T-cell (primary cell): ENCODE measurements at regions of chr6 and their contacts with region 1.

Region 1: GRCh38 chr6:154202339-154202738 is 154.3 kb downstream of the IPCEF1 start:
- DNase-seq: no peak
- ATAC-seq: no peak
- H3K4me3 ChIP-seq: no peak overlapping the region
- H3K4me3 Mint-ChIP-seq: no peak overlapping the region
- H3K27ac ChIP-seq: no peak overlapping the region
- H3K27ac Mint-ChIP-seq: peak overlapping the region in 1 of 2 donors; percentile 21
- H3K4me1 ChIP-seq: peaks cover 0 to 2% of the 10 kb centered on the region in 2 experiments
- H3K4me1 Mint-ChIP-seq: peaks cover 68 to 83% (median 69%) of the 10 kb centered on the region in 3 donors
- H3K27me3 ChIP-seq: no peaks in the 10 kb centered on the region
- H3K27me3 Mint-ChIP-seq: no peaks in the 10 kb centered on the region

Region 2: DNA sequence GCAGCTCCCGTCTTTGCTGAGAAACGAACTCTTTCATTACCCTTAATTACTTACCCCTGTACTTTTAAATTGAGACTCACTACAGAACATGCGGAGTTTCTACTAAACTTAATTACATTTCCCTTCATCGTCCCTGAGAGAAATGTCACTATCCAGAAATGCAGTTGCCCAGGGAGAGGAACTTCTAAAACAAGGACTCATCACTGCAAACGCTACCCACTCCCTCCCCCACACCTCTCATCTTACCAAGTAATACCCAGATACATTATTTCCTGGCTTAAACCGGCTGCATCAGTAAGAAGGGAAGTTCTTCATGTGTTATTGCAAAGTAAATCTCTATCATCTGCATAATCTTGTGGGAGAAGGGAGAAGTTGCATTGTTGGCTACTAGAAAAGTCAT is 16.0 kb after region 1 on chr6:
- CTCF ChIA-PET with region 1: interaction called in 1 of 2 experiments, 3 read pairs
- POLR2A ChIA-PET with region 1: interaction called in 1 of 2 experiments, 11 read pairs
- DNase-seq: peak in 1 of 35 experiments; percentile 23
- ATAC-seq: peak in 2 of 4 experiments; percentile 43 to 62
- H3K4me3 ChIP-seq: no peak overlapping the region
- H3K4me3 Mint-ChIP-seq: peak overlapping the region in 2 of 3 donors; percentile 25 to 76
- H3K27ac ChIP-seq: no peak overlapping the region
- H3K27ac Mint-ChIP-seq: peak overlapping the region; percentile 87 to 91
- H3K4me1 ChIP-seq: peaks cover 24 to 44% of the 10 kb centered on the region in 2 experiments
- H3K4me1 Mint-ChIP-seq: peaks cover 43 to 64% (median 60%) of the 10 kb centered on the region in 3 donors
- H3K27me3 ChIP-seq: no peaks in the 10 kb centered on the region
- H3K27me3 Mint-ChIP-seq: no peaks in the 10 kb centered on the region